Panc1 (cell line): ENCODE measurements at regions of chr6 and their contacts with region 1.

Region 1: DNA sequence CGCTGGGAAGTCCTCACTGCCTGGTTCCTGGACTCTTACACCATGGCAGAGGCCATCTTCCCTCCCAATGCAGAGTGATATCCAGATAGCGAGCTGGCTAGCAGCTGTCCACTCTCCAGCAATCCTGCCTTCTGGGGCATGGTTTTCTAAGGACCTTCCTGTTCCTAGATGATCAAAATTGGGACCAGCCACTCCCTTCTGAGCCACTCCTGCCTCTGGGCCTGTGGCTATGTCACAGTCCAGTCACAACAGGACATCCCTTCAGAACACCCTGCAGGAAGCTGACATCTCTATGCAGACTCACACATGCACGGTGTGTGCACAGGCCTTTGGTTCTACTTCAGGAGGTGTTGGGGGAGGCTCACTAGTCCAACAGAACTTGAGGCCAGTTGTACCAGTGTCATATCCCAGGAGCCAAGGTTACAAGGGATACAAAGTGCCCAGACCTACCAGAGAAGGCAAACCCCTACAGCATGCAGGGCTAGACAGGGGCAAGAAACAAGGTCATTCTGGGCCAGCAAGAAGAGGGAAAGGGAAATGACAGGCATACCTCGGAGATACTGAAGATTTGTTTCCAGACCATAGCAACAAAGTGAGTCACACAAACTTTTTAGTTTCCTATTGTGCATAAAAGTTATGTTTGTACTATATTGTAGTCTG is 2.7 kb upstream of the MCCD1 start:
- DNase-seq: no peak
- ATAC-seq: no peak
- H3K4me3 ChIP-seq: no peak overlapping the region
- H3K27ac ChIP-seq: no peak overlapping the region
- H3K4me1 ChIP-seq: peaks cover 4% of the 10 kb centered on the region; the same call in 1 of the 2 replicates
- H3K27me3 ChIP-seq: no peaks in the 10 kb centered on the region
- CTCF ChIP-seq: no peak

Region 2: GRCh38 chr6:31180502-31180901 is 345.6 kb before region 1 on chr6:
- CTCF ChIA-PET with region 1: no interaction called
- POLR2A ChIA-PET with region 1: no interaction called
- in situ Hi-C with region 1: no loop called
- intact Hi-C with region 1: no loop called
- DNase-seq: no peak
- ATAC-seq: peak; percentile 69; the same call in 1 of the 2 replicates
- H3K4me3 ChIP-seq: no peak overlapping the region
- H3K27ac ChIP-seq: no peak overlapping the region
- H3K4me1 ChIP-seq: no peaks in the 10 kb centered on the region
- H3K27me3 ChIP-seq: no peaks in the 10 kb centered on the region
- CTCF ChIP-seq: no peak

Region 3: GRCh38 chr6:31559958-31560696 is 34.1 kb after region 1 on chr6:
- CTCF ChIA-PET with region 1: no interaction called
- POLR2A ChIA-PET with region 1: no interaction called
- in situ Hi-C with region 1: no loop called
- intact Hi-C with region 1: no loop called
- DNase-seq: no peak
- ATAC-seq: peak; percentile 80
- H3K4me3 ChIP-seq: no peak overlapping the region
- H3K27ac ChIP-seq: no peak overlapping the region
- H3K4me1 ChIP-seq: peaks cover 13% of the 10 kb centered on the region
- H3K27me3 ChIP-seq: no peaks in the 10 kb centered on the region
- CTCF ChIP-seq: no peak

Region 4: DNA sequence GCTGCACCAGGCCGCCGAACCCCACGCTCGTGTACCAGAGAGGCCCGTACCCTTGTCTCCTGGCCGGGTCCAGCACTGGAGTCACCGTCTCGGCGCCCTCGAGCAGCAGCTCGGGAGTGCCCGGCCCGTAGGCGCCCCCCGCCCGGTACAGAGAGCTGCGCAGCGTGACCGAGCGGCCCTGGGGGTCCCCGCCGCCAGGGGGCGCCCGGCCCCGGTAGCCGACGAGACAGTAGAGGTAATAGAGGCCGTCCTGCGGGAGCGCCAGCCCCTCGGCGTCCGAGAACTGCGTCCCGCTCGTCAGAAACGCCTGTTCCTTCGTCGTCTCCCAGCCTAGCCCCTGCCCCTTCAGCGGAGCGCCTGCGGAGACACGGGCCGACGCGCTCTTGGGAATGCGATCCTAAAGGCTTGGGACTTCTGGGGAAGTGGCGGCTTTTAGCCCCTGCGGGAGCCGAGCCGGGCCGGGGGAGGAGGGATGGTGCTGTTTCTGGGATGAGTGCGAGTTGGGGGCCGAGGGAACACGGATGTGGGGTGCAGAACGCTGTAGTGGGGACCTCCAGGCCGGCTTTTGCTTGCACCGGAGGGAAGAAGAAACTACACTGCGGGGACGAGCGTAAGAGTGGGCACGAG is 54.9 kb after region 1 on chr6:
- CTCF ChIA-PET with region 1: interaction called, 13 read pairs
- POLR2A ChIA-PET with region 1: no interaction called
- in situ Hi-C with region 1: no loop called
- intact Hi-C with region 1: no loop called
- DNase-seq: no peak
- ATAC-seq: peak; percentile 92
- H3K4me3 ChIP-seq: peak overlapping the region; percentile 78 to 80
- H3K27ac ChIP-seq: peak overlapping the region; percentile 84
- H3K4me1 ChIP-seq: peaks cover 22% of the 10 kb centered on the region
- H3K27me3 ChIP-seq: no peaks in the 10 kb centered on the region
- CTCF ChIP-seq: peak; percentile 99